ENCODE measurements at regions of chr20 and their contacts with region 1.

Region 1: DNA sequence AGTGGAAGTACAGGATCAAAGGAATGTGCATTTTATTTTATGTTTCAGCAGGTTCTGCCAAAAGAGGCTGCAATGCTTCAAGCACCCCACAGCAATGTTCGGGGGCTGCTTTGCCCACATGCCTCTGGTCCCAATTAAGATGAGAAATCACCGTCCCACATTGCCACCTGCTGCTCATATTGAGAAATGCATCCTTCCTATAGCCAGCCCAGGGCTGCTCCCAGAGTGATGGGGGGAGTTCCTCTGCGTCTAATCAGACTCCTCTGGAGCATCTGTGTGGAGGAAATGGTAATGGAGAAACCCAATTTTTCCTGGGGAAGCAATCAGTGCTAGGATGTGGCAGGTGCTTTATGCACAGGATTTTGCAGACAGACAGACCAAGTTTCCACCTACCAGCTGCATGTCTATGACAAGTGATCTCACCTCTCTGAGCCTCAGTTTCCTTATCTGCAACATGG is 33.7 kb downstream of the PTGIS start:
- DNase-seq: peak; percentile 36
- H3K4me3 ChIP-seq: no peak overlapping the region
- H3K27ac ChIP-seq: no peak overlapping the region
- H3K4me1 ChIP-seq: peaks cover 4% of the 10 kb centered on the region
- H3K27me3 ChIP-seq: no peaks in the 10 kb centered on the region
- CTCF ChIP-seq: peak; percentile 71 to 78

Region 2: GRCh38 chr20:49028684-49029083 is 505.6 kb before region 1 on chr20:
- CTCF ChIA-PET with region 1: no interaction called
- dilution Hi-C with region 1: no loop called
- in situ Hi-C with region 1: no loop called
- intact Hi-C with region 1: loop called (anchors 5 kb)
- DNase-seq: peak; percentile 13
- H3K4me3 ChIP-seq: no peak overlapping the region
- H3K27ac ChIP-seq: no peak overlapping the region
- H3K4me1 ChIP-seq: no peaks in the 10 kb centered on the region
- H3K27me3 ChIP-seq: no peaks in the 10 kb centered on the region
- CTCF ChIP-seq: peak; percentile 26 to 49

Region 3: GRCh38 chr20:49230561-49231193 is 303.6 kb before region 1 on chr20:
- CTCF ChIA-PET with region 1: interaction called, 14 read pairs
- dilution Hi-C with region 1: no loop called
- in situ Hi-C with region 1: no loop called
- intact Hi-C with region 1: no loop called
- DNase-seq: peak; percentile 56
- H3K4me3 ChIP-seq: no peak overlapping the region
- H3K27ac ChIP-seq: no peak overlapping the region
- H3K4me1 ChIP-seq: peaks cover 22% of the 10 kb centered on the region
- H3K27me3 ChIP-seq: no peaks in the 10 kb centered on the region
- CTCF ChIP-seq: no peak

Region 4: DNA sequence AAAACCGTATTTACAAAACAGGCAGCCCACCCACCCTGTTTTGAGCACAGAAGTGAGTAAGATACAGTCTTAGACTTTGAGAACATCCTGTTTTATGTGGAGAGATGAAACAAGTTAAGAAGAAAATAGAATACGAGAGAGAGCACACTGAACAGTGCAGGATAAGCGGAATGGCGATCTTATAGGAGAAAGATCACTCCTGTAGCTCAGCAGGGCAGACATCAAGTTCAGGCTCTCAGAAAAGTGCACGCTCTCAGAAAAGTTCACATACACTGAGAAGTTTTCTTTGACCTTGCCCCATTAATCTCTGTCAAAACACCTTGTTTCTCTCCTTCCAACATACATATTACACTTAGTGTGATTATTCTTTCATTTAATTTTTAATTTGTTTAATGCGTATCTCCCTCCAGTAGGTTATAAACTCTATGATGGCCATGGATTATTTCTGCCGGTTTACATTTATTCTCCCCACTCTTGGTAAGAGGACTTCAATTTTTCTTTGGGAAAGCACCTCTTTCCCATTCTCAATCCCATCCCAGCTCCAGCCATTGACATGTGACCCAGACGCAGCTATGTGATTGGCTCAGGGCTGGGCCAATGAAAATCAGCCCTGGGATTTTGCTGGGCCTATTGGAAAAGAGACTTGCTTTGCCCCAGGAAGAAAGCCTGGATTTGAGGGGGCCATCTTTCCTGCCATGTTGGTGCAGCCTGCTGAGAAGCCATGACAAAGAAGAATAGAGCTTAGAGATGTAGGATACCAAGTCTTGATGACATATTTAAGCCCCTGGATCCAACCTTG is 68.0 kb before region 1 on chr20:
- CTCF ChIA-PET with region 1: no interaction called
- dilution Hi-C with region 1: loop called (anchors 5 kb)
- in situ Hi-C with region 1: no loop called
- intact Hi-C with region 1: no loop called
- DNase-seq: no peak
- H3K4me3 ChIP-seq: no peak overlapping the region
- H3K27ac ChIP-seq: no peak overlapping the region
- H3K4me1 ChIP-seq: peaks cover under 1% of the 10 kb centered on the region
- H3K27me3 ChIP-seq: peaks cover 4% of the 10 kb centered on the region
- CTCF ChIP-seq: no peak

Region 5: GRCh38 chr20:49490702-49491110 is 43.6 kb before region 1 on chr20:
- CTCF ChIA-PET with region 1: no interaction called
- dilution Hi-C with region 1: no loop called
- in situ Hi-C with region 1: no loop called
- intact Hi-C with region 1: loop called (anchors 1 kb)
- DNase-seq: no peak
- H3K4me3 ChIP-seq: no peak overlapping the region
- H3K27ac ChIP-seq: no peak overlapping the region
- H3K4me1 ChIP-seq: no peaks in the 10 kb centered on the region
- H3K27me3 ChIP-seq: no peaks in the 10 kb centered on the region
- CTCF ChIP-seq: no peak